Left ventricle myocardium superior (tissue), 1 donor: ENCODE measurements at regions of chr3 and their contacts with region 1.

Region 1: GRCh38 chr3:124905849-124906248 is 18.7 kb upstream of the ITGB5 start:
- DNase-seq: no peak
- ATAC-seq: no peak

Region 2: GRCh38 chr3:124761250-124761796 is 144.5 kb before region 1 on chr3:
- intact Hi-C with region 1: loop called (anchors 2 kb)
- DNase-seq: peak; percentile 93
- ATAC-seq: peak; percentile 89

Region 3: DNA sequence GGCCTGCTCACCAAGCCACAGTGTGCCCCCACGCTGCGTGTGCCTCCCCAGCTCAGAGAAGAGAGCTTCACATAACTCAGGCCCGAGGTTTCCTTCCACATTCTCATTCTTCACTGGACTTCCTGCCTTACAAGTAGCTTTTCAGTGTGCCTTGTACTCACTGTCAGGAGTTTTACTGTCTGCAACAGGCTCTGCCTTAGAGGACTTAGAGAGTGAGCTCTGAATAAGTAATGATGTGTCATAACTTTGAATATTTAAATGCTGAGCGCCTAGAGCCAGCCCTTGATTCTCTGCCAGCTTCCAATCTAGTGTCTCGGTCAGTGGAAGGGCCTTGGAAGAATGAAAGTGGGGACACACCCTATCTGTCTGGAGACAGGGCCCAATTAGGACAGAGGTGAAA is 60.4 kb before region 1 on chr3:
- intact Hi-C with region 1: no loop called
- DNase-seq: no peak
- ATAC-seq: peak; percentile 84

Region 4: GRCh38 chr3:124860599-124860998 is 45.2 kb before region 1 on chr3:
- intact Hi-C with region 1: no loop called
- DNase-seq: peak; percentile 41
- ATAC-seq: peak; percentile 94